CD4-positive, alpha-beta T cell (primary cell): ENCODE measurements at regions of chrX and their contacts with region 1.

Region 1: DNA sequence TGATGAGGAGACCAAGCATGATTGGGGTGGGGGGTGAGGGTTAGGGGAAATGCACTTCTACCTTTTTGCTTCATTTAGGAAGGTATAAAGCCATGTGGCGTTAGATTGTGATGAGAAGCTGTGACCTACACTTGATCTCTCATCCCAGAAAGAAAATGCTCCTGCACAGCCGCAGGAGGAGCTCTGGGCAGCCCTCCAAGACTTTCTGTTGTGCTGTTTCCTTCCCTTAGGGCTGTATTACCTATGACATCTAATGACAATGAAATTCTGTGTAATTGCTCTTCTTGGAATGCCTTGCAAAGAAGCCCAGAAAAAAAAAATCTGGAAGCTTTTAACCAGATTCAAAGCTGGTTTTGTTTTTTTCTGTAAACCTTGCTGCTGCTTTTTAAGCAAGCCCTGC is 13.4 kb downstream of the PRPS2 start:
- DNase-seq: no peak
- ATAC-seq: no peak
- H3K4me3 ChIP-seq: no peak overlapping the region
- H3K4me3 Mint-ChIP-seq: no peak overlapping the region
- H3K27ac ChIP-seq: no peak overlapping the region
- H3K27ac Mint-ChIP-seq: no peak overlapping the region
- H3K4me1 ChIP-seq: no peaks in the 10 kb centered on the region
- H3K4me1 Mint-ChIP-seq: peaks cover 5% of the 10 kb centered on the region
- H3K27me3 ChIP-seq: no peaks in the 10 kb centered on the region
- H3K27me3 Mint-ChIP-seq: no peaks in the 10 kb centered on the region
- CTCF ChIP-seq: no peak

Region 2: DNA sequence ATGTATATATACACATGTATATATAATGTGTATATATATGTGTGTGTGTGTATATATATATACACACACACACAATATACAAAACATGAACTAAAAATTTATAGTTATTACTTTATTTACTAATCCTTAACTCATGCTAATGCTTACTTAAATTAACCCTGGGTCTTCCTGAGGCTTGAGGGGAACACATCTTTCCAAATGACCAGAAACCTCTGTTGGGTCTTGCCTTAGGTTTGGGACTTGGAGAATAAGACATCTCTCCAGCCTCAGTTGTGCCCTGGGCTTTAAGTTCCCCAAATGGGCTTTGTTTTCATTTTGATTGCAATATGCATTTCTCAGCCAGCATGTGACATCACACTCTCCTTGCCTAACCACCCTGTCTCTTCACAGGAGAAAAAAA is 1217.4 kb after region 1 on chrX:
- CTCF ChIA-PET with region 1: no interaction called
- POLR2A ChIA-PET with region 1: no interaction called
- intact Hi-C with region 1: loop called in 1 of 2 experiments (anchors 5 kb)
- DNase-seq: no peak
- ATAC-seq: no peak
- H3K4me3 ChIP-seq: no peak overlapping the region
- H3K4me3 Mint-ChIP-seq: no peak overlapping the region
- H3K27ac ChIP-seq: no peak overlapping the region
- H3K27ac Mint-ChIP-seq: no peak overlapping the region
- H3K4me1 ChIP-seq: peaks cover 2% of the 10 kb centered on the region
- H3K4me1 Mint-ChIP-seq: peaks cover 9% of the 10 kb centered on the region
- H3K27me3 ChIP-seq: no peaks in the 10 kb centered on the region
- H3K27me3 Mint-ChIP-seq: no peaks in the 10 kb centered on the region
- CTCF ChIP-seq: no peak